OCI-LY7 (cell line): ENCODE measurements at regions of chr5 and their contacts with region 1.

Region 1: DNA sequence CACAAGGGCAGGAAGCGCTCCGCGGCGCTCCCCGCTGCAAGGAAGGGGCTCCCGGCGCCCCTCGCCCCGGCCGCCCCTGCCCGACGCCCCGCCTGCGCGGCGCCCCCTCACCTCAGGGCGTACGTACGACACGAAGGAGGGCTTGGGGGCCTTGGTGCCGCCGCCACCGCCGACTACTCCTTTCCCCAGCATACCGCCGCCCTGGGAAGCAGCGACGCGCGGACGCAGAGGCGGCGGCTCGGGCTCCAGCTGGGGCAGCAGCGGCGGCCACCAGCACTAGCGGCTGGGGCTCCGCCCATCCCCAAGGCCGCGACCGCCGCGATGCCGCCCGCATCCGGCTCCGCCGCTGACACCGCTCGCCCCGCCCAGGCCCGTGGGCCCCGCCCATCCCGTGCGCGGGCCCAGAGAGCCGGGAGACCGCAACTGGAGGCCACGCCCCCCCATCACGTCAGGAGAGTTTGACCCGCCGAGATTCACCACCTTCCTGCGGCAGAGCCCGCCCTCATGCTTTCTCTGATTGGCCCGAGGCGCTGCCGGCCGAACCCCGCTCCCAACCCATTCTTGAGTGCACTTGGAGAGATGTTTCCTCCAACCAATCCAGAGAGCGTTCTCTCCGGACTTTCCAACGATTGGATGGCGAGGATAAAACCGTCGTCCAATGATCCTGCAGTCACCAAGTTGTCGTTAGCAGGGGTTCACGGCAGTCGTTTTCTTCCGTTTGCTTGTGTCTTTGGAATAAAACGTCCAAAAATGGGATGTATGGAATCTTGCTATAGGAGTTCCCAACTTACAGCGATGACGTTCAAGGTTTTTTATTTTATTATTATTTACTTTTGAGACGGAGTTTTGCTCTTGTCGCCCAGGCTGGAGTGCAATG is at the start of gene MTMR12:
- DNase-seq: peak; percentile 99
- H3K4me3 ChIP-seq: peak within 1 kb of the TSS; percentile 90
- H3K27ac ChIP-seq: peak within 1 kb of the TSS; percentile 85
- H3K4me1 ChIP-seq: peaks cover 38% of the 10 kb centered on the region
- CTCF ChIP-seq: 0 out of 2 replicates have a peak, but pooled peaks have one; percentile 15
- total RNA-seq, gene MTMR12: 32.5 and 33.6 TPM in 2 replicates

Region 2: GRCh38 chr5:32174011-32174870 is 138.6 kb before region 1 on chr5 and contains the start of gene GOLPH3:
- CTCF ChIA-PET with region 1: no interaction called
- POLR2A ChIA-PET with region 1: interaction called, 4 read pairs
- intact Hi-C with region 1: loop called (anchors 2 kb)
- DNase-seq: peak; percentile 93
- H3K4me3 ChIP-seq: peak within 1 kb of the TSS; percentile 93
- H3K27ac ChIP-seq: peak within 1 kb of the TSS; percentile 75
- H3K4me1 ChIP-seq: peaks cover 27% of the 10 kb centered on the region
- CTCF ChIP-seq: no peak
- total RNA-seq, gene GOLPH3: 25.7 and 35.9 TPM in 2 replicates

Region 3: GRCh38 chr5:32202394-32202793 is 110.5 kb before region 1 on chr5:
- CTCF ChIA-PET with region 1: no interaction called
- POLR2A ChIA-PET with region 1: no interaction called
- intact Hi-C with region 1: no loop called
- DNase-seq: no peak
- H3K4me3 ChIP-seq: no peak overlapping the region
- H3K27ac ChIP-seq: no peak overlapping the region
- H3K4me1 ChIP-seq: no peaks in the 10 kb centered on the region
- CTCF ChIP-seq: no peak

Region 4: GRCh38 chr5:32232441-32233219 is 80.3 kb before region 1 on chr5:
- CTCF ChIA-PET with region 1: interaction called, 3 read pairs
- POLR2A ChIA-PET with region 1: no interaction called
- intact Hi-C with region 1: loop called (anchors 5 kb)
- DNase-seq: peak; percentile 78
- H3K4me3 ChIP-seq: no peak overlapping the region
- H3K27ac ChIP-seq: no peak overlapping the region
- H3K4me1 ChIP-seq: no peaks in the 10 kb centered on the region
- CTCF ChIP-seq: peak; percentile 91

Region 5: GRCh38 chr5:32254881-32255539 is 57.9 kb before region 1 on chr5:
- CTCF ChIA-PET with region 1: no interaction called
- POLR2A ChIA-PET with region 1: no interaction called
- intact Hi-C with region 1: no loop called
- DNase-seq: no peak
- H3K4me3 ChIP-seq: no peak overlapping the region
- H3K27ac ChIP-seq: no peak overlapping the region
- H3K4me1 ChIP-seq: no peaks in the 10 kb centered on the region
- CTCF ChIP-seq: no peak

Region 6: DNA sequence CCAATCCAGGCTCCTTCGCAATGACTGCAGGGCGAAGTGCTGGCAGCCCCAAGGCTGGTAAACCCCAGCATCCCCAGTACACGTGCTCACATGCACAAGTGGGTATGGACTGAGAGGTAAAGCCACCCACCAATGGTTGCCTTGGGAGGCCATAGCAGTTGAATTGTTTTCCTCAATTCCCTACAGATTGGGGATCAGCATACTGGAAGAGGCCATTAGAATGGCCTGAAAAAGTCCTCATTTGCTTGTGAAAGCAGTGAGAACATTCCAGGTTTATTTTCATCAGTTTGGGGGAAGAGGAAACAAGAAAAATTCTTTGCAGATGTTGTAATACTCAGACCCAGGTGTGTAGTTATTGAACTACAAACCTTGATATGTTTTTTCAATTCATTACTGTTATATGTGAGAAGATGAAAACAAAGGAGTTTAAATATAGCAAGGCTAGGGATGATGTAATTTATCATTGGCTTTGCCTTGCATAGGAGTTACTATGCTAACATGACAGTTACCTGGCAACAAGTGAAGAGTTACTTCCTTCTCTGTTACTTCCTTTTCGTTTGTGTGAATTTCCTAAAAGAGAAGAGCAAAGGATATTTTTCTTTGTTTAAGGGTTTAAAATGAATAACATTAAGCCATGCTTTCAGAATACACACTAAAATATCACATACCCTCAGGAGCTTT is 36.6 kb before region 1 on chr5:
- CTCF ChIA-PET with region 1: no interaction called
- POLR2A ChIA-PET with region 1: interaction called, 5 read pairs
- intact Hi-C with region 1: loop called (anchors 2 kb)
- DNase-seq: peak; percentile 64
- H3K4me3 ChIP-seq: no peak overlapping the region
- H3K27ac ChIP-seq: peak overlapping the region; percentile 58
- H3K4me1 ChIP-seq: peaks cover 42% of the 10 kb centered on the region
- CTCF ChIP-seq: no peak

Region 7: DNA sequence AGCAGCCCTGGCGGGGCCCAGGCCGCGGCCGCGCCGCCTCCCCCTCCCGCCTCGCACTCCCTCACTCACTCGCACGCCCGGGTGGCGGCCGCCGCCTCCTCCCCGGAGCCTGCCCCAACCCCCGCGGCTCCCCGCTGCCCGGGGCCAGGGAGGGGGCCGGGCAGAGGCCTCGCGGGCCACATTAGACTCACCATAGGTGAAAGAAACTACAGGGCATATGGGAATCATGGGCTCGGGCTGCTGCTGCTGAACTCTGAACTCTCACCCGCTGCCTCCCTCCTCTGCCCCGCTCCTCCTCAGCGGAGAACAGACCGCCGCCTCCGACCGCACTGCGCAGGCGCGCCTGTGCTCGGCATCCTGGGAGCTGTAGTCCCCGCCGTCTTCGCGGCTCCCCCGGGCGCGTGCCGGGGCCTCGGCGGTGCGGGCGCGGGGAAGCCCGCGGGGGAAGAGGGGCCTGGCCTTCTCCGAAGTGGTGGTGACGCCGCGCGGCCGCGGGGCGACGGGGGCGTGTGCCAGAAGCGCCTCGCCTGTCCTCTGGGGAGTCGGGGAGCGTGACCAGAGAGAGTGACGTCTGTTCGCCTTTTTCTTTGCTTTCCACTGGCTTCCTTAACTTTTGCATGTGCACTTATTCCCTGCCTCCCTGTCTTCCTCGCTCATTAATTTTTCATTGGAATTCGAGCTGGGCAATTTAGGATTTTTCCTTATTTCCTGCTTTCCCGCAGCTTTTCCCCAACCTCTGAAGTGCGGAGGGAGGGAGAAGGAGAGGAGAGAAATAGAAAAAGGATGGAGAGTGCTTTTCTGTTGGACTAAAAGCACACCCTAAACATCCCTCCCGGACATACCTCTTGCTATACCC is 131.8 kb after region 1 on chr5 and contains the start of gene ZFR:
- CTCF ChIA-PET with region 1: no interaction called
- POLR2A ChIA-PET with region 1: no interaction called
- intact Hi-C with region 1: loop called (anchors 1 kb)
- DNase-seq: peak; percentile 90
- H3K4me3 ChIP-seq: peak within 1 kb of the TSS; percentile 85
- H3K27ac ChIP-seq: peak within 1 kb of the TSS; percentile 63
- H3K4me1 ChIP-seq: peaks cover 17% of the 10 kb centered on the region
- CTCF ChIP-seq: no peak
- total RNA-seq, gene ZFR: 52.7 and 54.8 TPM in 2 replicates